Aorta (tissue), 5 donors: ENCODE measurements at regions of chr12 and their contacts with region 1.

Region 1: DNA sequence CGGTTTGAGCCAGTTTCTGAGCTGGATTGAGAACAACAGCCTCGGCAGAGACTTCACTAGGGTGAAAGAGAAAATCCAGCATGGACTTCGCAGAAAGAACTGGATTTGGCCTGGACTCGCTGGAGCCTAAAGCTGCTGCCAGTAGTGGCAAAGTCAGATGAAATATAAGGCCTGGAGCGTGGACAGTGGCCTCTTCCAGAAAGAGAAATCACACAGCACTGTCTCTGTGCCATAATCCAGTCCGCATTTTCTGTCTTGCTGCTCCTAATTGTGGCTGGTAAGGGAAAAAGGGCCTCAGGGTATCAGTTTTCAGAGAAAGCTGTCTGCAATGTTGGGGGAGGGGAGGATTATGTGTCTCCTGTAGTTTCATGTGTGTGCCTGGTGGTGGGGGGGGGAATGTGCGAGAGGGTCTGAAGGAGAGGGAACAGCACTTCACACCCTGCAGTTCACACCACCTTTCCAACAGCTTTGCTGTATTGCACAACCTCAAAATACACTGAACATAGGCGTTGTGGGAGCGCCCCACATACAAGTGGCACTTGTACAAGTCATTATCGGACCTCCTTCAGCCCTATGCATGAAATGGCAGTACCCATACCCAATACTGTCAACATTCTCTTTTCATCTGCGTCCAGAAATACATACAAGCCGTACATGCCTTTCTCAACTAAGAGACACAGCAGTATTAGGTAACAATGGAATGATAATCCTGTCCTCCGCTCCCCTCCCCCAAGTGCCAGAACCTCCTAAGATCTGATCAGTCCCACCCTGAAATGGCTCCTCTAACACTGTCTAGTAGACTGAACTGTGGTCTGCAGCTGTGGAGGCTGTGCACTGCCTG is 107.5 kb upstream of the ATF7IP start:
- DNase-seq: peak; percentile 93 to 97
- ATAC-seq: peak; percentile 90
- H3K4me3 ChIP-seq: no peak overlapping the region
- H3K27ac ChIP-seq: peak overlapping the region; percentile 71 to 85
- H3K4me1 ChIP-seq: peaks cover 0 to 3% of the 10 kb centered on the region in 2 donors
- H3K27me3 ChIP-seq: no peaks in the 10 kb centered on the region

Region 2: DNA sequence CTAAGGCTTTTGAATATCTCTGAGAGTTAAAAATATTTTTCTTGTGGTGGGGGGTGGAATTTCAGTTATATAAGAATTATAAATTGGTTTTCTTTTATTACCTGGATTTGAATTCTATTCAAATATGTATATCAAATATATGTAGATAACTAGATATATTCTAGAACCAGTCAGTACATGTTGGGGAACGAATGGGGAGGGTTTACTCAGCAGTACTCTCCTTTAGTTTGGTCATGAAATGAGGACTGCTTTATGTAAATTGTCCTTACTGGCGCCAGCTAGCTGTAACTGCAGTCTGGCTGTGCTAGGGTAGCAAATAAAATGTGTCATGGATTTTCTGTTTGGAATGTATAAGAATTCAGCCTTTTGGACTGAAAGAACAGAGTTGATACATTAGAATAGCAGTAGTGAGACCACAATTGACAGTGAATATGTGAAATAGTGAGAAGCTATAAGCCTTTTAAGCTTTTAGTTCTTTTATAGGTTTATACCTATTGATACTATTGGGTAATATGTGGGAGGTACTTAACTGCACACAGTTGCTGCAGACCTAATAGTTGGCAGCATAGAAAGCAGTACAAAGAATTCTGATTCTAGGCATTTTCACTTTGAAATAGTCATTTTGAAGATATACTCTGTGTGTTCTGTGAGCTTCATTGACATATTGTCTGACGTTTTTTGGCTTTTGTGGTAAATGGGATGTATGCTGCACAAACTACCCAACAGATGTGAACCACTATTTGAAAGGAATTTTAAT is 136.5 kb after region 1 on chr12:
- intact Hi-C with region 1: loop called in 1 of 2 experiments (anchors 5 kb)
- DNase-seq: no peak
- ATAC-seq: peak; percentile 81
- H3K4me3 ChIP-seq: peak overlapping the region; percentile 16 to 41
- H3K27ac ChIP-seq: no peak overlapping the region
- H3K4me1 ChIP-seq: peaks cover 0 to 2% of the 10 kb centered on the region in 2 donors
- H3K27me3 ChIP-seq: no peaks in the 10 kb centered on the region

Region 3: GRCh38 chr12:14417715-14418114 is 159.8 kb after region 1 on chr12:
- intact Hi-C with region 1: loop called in 1 of 2 experiments (anchors 5 kb)
- DNase-seq: peak; percentile 74 to 78
- ATAC-seq: peak; percentile 62
- H3K4me3 ChIP-seq: no peak overlapping the region
- H3K27ac ChIP-seq: no peak overlapping the region
- H3K4me1 ChIP-seq: peaks cover 2 to 6% of the 10 kb centered on the region in 2 donors
- H3K27me3 ChIP-seq: no peaks in the 10 kb centered on the region

Region 4: GRCh38 chr12:14664510-14664909 is 406.6 kb after region 1 on chr12:
- intact Hi-C with region 1: no loop called
- DNase-seq: no peak
- ATAC-seq: no peak
- H3K4me3 ChIP-seq: no peak overlapping the region
- H3K27ac ChIP-seq: no peak overlapping the region
- H3K4me1 ChIP-seq: no peaks in the 10 kb centered on the region
- H3K27me3 ChIP-seq: no peaks in the 10 kb centered on the region

Region 5: GRCh38 chr12:14937689-14938088 is 679.7 kb after region 1 on chr12:
- intact Hi-C with region 1: no loop called
- DNase-seq: no peak
- ATAC-seq: no peak
- H3K4me3 ChIP-seq: no peak overlapping the region
- H3K27ac ChIP-seq: no peak overlapping the region
- H3K4me1 ChIP-seq: no peaks in the 10 kb centered on the region
- H3K27me3 ChIP-seq: no peaks in the 10 kb centered on the region